SK-N-SH (cell line): ENCODE measurements at regions of chr19 and their contacts with region 1.

Region 1: GRCh38 chr19:46704379-46705076 is 12.4 kb downstream of the PRKD2 start:
- DNase-seq: peak; percentile 83
- H3K4me3 ChIP-seq: peak overlapping the region in 1 of 2 experiments; percentile 47; a peak in 1 of 4 replicates
- H3K27ac ChIP-seq: no peak overlapping the region
- H3K4me1 ChIP-seq: no peaks in the 10 kb centered on the region
- H3K27me3 ChIP-seq: no peaks in the 10 kb centered on the region
- CTCF ChIP-seq: peak; percentile 78
- EP300 ChIP-seq: no peak
- RAD21 ChIP-seq: peak; percentile 48

Region 2: GRCh38 chr19:46685189-46685588 is 19.3 kb before region 1 on chr19:
- CTCF ChIA-PET with region 1: interaction called, 17 read pairs
- POLR2A ChIA-PET with region 1: no interaction called
- DNase-seq: no peak
- H3K4me3 ChIP-seq: no peak overlapping the region
- H3K27ac ChIP-seq: no peak overlapping the region
- H3K4me1 ChIP-seq: no peaks in the 10 kb centered on the region
- H3K27me3 ChIP-seq: no peaks in the 10 kb centered on the region
- CTCF ChIP-seq: no peak
- EP300 ChIP-seq: no peak
- RAD21 ChIP-seq: no peak

Region 3: GRCh38 chr19:46691104-46691503 is 13.4 kb before region 1 on chr19:
- CTCF ChIA-PET with region 1: interaction called, 32 read pairs
- POLR2A ChIA-PET with region 1: no interaction called
- DNase-seq: peak; percentile 24
- H3K4me3 ChIP-seq: no peak overlapping the region
- H3K27ac ChIP-seq: no peak overlapping the region
- H3K4me1 ChIP-seq: no peaks in the 10 kb centered on the region
- H3K27me3 ChIP-seq: no peaks in the 10 kb centered on the region
- CTCF ChIP-seq: no peak
- EP300 ChIP-seq: no peak
- RAD21 ChIP-seq: no peak

Region 4: DNA sequence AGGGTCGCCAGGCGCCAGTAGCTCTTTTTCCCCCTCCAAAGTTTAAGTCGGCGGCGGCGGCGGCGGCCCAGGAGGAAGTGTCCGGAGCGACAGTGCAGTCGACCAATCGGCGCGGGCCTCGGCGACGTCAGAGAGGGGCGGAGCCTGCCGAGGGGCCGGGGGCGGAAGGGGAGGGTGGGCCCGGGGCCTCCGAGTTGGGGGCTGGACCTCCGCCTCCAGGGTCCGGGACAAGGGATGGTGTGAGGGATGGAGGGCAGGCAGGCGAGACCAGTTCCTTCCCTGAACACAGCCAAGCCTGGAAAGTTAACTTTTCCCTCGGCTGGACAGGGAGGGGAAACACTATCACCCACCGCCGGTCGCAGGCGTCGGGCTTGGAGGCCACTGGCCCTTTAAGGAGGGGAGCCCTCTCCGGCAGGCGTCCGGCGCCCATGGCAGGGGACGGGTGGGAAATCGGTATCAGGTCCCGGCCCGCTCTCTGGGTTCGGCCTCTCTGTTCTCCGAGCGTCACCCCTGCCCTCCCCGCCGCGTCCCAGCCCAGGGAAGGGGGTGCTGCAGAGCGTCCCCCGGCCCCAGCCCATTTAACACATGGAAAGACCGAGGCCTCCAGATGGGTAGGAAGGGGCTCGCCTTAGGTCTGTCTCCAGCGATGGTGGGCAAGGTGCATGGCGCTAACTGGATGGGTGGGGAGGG is 12.7 kb after region 1 on chr19 and contains the start of gene PRKD2:
- CTCF ChIA-PET with region 1: interaction called, 54 read pairs
- POLR2A ChIA-PET with region 1: interaction called, 6 read pairs
- DNase-seq: peak; percentile 98
- H3K4me3 ChIP-seq: peak within 1 kb of the TSS; percentile 85 to 88
- H3K27ac ChIP-seq: peak within 1 kb of the TSS; percentile 79 to 91
- H3K4me1 ChIP-seq: peaks cover 0 to 19% of the 10 kb centered on the region in 2 experiments; a peak in 2 of 4 replicates
- H3K27me3 ChIP-seq: no peaks in the 10 kb centered on the region
- CTCF ChIP-seq: no peak
- EP300 ChIP-seq: no peak
- RAD21 ChIP-seq: no peak
- polyA plus RNA-seq, gene PRKD2: 14.1 and 21.4 TPM in 2 replicates

Region 5: GRCh38 chr19:46776927-46777911 is 72.7 kb after region 1 on chr19:
- CTCF ChIA-PET with region 1: no interaction called
- POLR2A ChIA-PET with region 1: no interaction called
- DNase-seq: peak; percentile 69
- H3K4me3 ChIP-seq: no peak overlapping the region
- H3K27ac ChIP-seq: no peak overlapping the region
- H3K4me1 ChIP-seq: no peaks in the 10 kb centered on the region
- H3K27me3 ChIP-seq: no peaks in the 10 kb centered on the region
- CTCF ChIP-seq: no peak
- EP300 ChIP-seq: no peak
- RAD21 ChIP-seq: no peak